ENCODE measurements at regions of chr5 and their contacts with region 1.

Region 1: DNA sequence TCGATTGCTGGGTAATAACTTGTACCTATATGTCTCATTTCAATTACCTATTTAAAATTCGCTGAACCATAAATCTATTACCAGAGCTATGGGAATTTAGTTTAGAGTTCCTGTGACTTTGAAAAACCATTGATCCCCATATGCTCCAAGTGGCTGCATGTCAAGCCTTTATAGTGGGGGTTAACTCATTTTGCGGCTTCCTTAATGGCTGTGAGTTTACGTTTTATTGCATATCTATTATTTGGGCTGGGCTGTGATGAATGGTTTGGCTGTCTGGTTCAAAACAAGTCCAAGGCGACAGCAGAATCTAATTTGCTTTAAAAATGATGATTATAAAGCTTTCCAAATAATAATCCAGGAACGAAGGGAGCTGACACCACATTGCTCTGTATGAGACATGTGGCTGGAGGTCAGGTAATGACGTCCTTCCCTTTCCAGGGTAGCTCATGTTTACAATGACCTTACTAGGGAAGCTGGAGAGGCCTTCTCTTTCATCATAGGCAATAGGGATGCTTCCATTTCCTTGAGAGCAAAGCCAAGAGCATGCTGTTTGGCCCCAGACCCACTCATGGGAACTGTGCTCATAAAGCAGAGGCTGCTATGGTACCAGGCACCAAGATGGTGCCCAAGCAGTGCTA is 258.3 kb downstream of the HSPA4 start:
- DNase-seq: no peak
- H3K4me3 ChIP-seq: no peak overlapping the region
- H3K27ac ChIP-seq: no peak overlapping the region
- H3K4me1 ChIP-seq: no peaks in the 10 kb centered on the region
- H3K27me3 ChIP-seq: no peaks in the 10 kb centered on the region
- CTCF ChIP-seq: no peak

Region 2: GRCh38 chr5:133130387-133131118 is 179.6 kb before region 1 on chr5:
- intact Hi-C with region 1: no loop called
- DNase-seq: peak in 1 of 2 donors; percentile 15
- H3K4me3 ChIP-seq: no peak overlapping the region
- H3K27ac ChIP-seq: no peak overlapping the region
- H3K4me1 ChIP-seq: no peaks in the 10 kb centered on the region
- H3K27me3 ChIP-seq: no peaks in the 10 kb centered on the region
- CTCF ChIP-seq: no peak

Region 3: GRCh38 chr5:133273661-133274596 is 36.2 kb before region 1 on chr5:
- intact Hi-C with region 1: loop called (anchors 5 kb)
- DNase-seq: no peak
- H3K4me3 ChIP-seq: no peak overlapping the region
- H3K27ac ChIP-seq: no peak overlapping the region
- H3K4me1 ChIP-seq: no peaks in the 10 kb centered on the region
- H3K27me3 ChIP-seq: no peaks in the 10 kb centered on the region
- CTCF ChIP-seq: no peak

Region 4: DNA sequence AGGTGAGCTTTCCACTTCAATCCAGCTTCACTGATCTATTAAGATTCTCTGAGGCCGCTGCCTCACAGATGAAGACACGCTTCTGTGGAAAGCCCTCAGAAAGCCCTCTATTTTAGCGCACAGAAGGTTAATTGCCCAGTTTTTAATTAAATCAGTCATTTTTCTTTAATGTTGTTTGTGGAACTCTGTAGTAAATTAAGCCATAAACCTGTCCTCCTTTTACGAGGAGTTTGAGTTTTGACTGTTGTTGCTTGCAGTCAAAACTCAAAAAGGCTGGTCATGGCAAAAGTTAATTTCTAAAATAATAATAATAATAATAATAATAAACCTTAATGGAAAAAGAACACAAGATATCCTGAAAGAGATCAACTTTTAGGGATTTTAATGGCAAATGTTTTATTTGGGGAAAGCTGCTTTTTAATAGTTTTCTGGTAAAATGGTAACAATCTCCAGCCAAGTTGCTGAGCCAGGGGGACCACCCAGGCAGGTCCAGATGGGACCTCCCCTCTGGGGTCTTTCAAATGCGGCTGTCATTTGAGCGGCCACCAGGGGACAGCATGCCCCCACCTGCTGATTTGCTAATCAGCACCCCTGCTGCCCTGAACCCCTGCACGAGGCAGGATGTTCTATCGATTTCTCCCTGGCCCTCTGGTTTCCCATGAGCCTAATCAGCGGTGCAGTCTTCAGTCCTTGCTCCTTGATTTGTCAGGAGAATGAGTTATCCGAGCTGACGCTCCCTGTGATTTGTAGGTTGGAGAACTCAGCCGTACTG is 55.0 kb after region 1 on chr5:
- intact Hi-C with region 1: no loop called
- DNase-seq: no peak
- H3K4me3 ChIP-seq: no peak overlapping the region
- H3K27ac ChIP-seq: no peak overlapping the region
- H3K4me1 ChIP-seq: no peaks in the 10 kb centered on the region
- H3K27me3 ChIP-seq: no peaks in the 10 kb centered on the region
- CTCF ChIP-seq: no peak

Measured in ascending aorta (tissue), 2 donors.